ENCODE measurements at regions of chr2 and their contacts with region 1.

Region 1: GRCh38 chr2:196277002-196277401 is 105.6 kb upstream of the STK17B start:
- DNase-seq: peak in 7 of 9 donors; percentile 45 to 74 (median 63)
- ATAC-seq: peak; percentile 79
- H3K4me3 ChIP-seq: no peak overlapping the region
- H3K4me3 Mint-ChIP-seq: peak overlapping the region in 6 of 10 donors; percentile 30 to 83 (median 65)
- H3K27ac ChIP-seq: peak overlapping the region; percentile 63
- H3K27ac Mint-ChIP-seq: peak overlapping the region; percentile 50 to 99 (median 89)
- H3K4me1 ChIP-seq: peaks cover 21 to 42% of the 10 kb centered on the region in 2 donors
- H3K4me1 Mint-ChIP-seq: peaks cover 29 to 60% (median 47%) of the 10 kb centered on the region in 7 donors
- H3K27me3 ChIP-seq: no peaks in the 10 kb centered on the region
- H3K27me3 Mint-ChIP-seq: no peaks in the 10 kb centered on the region

Region 2: DNA sequence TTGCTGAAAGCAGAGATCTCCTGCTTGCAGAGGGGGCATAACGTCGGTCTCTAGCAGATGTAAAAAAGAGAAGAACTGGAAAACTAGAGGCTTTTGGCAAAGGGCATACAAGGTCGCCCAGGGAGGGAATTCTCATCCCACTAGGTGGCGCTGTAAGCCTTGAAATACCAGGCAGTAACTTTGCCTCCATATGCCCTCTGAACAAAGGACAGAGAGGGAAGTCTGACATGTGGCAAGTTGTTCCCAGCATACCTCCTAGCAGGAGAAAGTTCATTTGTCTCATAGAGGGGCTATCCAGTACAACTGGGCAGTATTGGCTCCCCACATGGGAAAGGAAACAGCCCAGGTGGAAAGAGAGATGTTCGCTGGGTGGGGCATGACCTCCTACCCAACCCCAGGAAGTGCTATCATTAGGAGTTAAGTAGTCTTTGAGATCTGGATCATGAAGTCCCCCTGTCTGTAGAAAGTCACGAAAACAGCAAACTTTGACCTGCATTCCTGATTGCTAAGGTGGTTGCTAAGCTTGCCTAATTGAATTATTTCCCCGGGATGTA is 145.5 kb before region 1 on chr2:
- CTCF ChIA-PET with region 1: interaction called, 12 read pairs
- POLR2A ChIA-PET with region 1: interaction called, 5 read pairs
- intact Hi-C with region 1: loop called (anchors 1 to 2 kb)
- DNase-seq: peak in 4 of 9 donors; percentile 30 to 57 (median 50)
- ATAC-seq: peak; percentile 58
- H3K4me3 ChIP-seq: no peak overlapping the region
- H3K4me3 Mint-ChIP-seq: peak overlapping the region in 3 of 10 donors; percentile 1 to 36 (median 32)
- H3K27ac ChIP-seq: no peak overlapping the region
- H3K27ac Mint-ChIP-seq: peak overlapping the region in 8 of 9 donors; percentile 63 to 91 (median 79)
- H3K4me1 ChIP-seq: no peaks in the 10 kb centered on the region
- H3K4me1 Mint-ChIP-seq: peaks cover 0 to 27% (median 16%) of the 10 kb centered on the region in 7 donors
- H3K27me3 ChIP-seq: no peaks in the 10 kb centered on the region
- H3K27me3 Mint-ChIP-seq: no peaks in the 10 kb centered on the region

Region 3: DNA sequence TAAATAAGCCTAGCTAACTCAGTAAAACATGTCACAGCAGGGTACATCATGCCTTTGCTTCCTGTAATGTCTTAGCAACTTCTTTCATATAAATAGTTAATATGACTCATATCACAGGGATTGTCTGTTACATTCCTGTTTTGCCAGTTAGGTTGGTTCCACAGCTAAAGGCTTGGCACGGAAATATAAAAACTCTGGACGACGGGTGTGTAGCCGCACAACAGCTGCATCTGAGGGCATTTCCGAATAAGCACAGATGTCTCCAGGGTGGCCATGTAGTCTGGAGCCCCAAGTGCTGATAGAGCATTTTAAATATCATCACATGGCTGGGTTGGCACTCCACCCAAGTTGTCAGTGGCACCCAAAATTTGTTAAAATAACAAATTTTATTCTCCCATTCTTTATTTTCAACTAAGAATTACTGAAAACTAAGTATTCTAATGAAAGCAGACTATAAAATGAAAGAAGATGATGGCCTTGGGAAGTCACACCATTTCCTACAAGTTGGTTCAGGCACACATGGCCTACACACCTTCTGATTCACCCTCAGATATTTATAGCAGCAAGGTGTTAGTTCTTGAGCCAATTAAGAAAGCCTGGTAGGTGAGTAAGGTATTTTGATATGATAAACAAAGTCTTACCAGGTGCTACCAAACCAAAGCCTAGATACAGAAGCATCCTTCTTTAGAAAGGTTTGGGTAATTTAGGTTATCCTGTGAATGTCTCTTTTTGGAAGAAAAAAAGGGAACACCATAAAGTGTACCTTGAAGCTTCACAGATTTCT is 43.8 kb before region 1 on chr2:
- CTCF ChIA-PET with region 1: interaction called, 25 read pairs
- POLR2A ChIA-PET with region 1: interaction called, 24 read pairs
- intact Hi-C with region 1: no loop called
- DNase-seq: no peak
- ATAC-seq: no peak
- H3K4me3 ChIP-seq: peak overlapping the region; percentile 19
- H3K4me3 Mint-ChIP-seq: peak overlapping the region in 8 of 10 donors; percentile 29 to 71 (median 46)
- H3K27ac ChIP-seq: peak overlapping the region; percentile 84
- H3K27ac Mint-ChIP-seq: peak overlapping the region; percentile 89 to 99 (median 97)
- H3K4me1 ChIP-seq: peaks cover 31 to 72% of the 10 kb centered on the region in 2 donors
- H3K4me1 Mint-ChIP-seq: peaks cover 36 to 97% (median 89%) of the 10 kb centered on the region in 7 donors
- H3K27me3 ChIP-seq: no peaks in the 10 kb centered on the region
- H3K27me3 Mint-ChIP-seq: no peaks in the 10 kb centered on the region

Region 4: DNA sequence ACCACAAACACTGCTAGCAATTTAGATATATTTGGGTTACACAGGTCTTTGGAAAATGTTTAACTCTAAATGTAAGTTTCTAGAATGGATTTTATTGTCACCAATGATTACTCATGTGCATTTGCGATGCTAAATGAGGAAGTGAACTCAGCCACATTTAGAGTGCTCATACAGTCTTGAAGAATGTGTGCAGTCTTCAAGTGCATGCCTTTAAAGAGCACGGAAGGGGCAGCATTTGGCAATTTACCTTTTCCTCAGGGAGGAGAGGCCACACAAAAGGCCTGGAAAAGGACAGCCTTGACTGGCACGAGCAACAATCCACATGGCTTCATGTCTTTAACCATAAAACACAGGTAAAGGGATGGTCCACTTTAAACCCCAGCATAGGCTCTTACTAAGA is 27.1 kb before region 1 on chr2:
- CTCF ChIA-PET with region 1: interaction called, 3 read pairs
- POLR2A ChIA-PET with region 1: interaction called, 33 read pairs
- intact Hi-C with region 1: no loop called
- DNase-seq: no peak
- ATAC-seq: peak; percentile 80
- H3K4me3 ChIP-seq: no peak overlapping the region
- H3K4me3 Mint-ChIP-seq: peak overlapping the region; percentile 4 to 69 (median 44)
- H3K27ac ChIP-seq: no peak overlapping the region
- H3K27ac Mint-ChIP-seq: peak overlapping the region; percentile 15 to 89 (median 80)
- H3K4me1 ChIP-seq: peaks cover 9 to 54% of the 10 kb centered on the region in 2 donors
- H3K4me1 Mint-ChIP-seq: peaks cover 47 to 93% (median 89%) of the 10 kb centered on the region in 7 donors
- H3K27me3 ChIP-seq: no peaks in the 10 kb centered on the region
- H3K27me3 Mint-ChIP-seq: no peaks in the 10 kb centered on the region

Region 5: DNA sequence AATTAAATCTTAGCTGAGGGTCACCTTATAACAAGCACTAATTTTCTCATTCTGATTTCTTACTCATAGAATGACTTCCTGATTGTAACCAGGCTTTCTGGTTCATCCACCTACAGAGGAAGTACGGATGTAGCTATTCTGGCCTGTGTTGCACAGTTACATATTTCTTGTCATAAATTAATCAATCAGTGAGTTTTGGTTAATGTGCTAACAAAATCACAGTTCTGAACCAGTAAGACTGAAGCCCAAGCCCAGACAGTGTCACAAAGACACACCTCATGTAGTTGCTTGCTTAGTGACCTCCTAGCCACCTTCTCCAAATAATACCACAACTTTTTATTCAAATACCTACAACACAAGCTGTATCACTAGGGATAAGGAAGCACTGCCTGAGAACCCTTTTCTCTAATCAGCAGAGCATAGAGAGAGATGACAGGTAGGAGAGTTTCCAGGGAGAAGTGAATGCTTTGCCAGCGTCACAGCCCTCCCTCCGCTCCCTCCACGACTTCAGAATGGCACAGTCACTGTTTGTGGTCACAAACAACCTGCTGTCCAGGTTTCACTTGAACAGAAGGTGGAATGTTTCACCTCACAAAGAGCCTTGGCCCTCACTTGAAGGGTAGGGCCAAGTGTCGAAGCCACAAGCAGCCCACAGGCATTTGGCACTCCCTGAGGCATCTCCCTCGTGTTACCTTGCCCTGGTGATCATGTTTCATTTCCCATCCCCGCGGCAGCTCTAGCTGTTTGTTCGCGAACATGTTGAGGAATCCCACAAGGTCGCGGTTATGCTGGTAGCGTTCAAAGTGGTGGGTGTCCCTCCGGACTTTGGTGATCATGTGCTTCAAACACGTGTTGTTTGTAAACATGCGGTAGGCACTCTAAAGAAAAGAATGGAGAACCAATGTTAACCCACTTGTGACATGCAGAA is 15.1 kb after region 1 on chr2:
- CTCF ChIA-PET with region 1: interaction called, 4 read pairs
- POLR2A ChIA-PET with region 1: interaction called, 5 read pairs
- intact Hi-C with region 1: loop called in 1 of 2 experiments (anchors 1 kb)
- DNase-seq: no peak
- ATAC-seq: peak; percentile 47
- H3K4me3 ChIP-seq: no peak overlapping the region
- H3K4me3 Mint-ChIP-seq: peak overlapping the region in 1 of 10 donors; percentile 31
- H3K27ac ChIP-seq: no peak overlapping the region
- H3K27ac Mint-ChIP-seq: peak overlapping the region in 3 of 9 donors; percentile 2 to 51 (median 44)
- H3K4me1 ChIP-seq: peaks cover 6 to 10% of the 10 kb centered on the region in 2 donors
- H3K4me1 Mint-ChIP-seq: peaks cover 21 to 56% (median 42%) of the 10 kb centered on the region in 7 donors
- H3K27me3 ChIP-seq: no peaks in the 10 kb centered on the region
- H3K27me3 Mint-ChIP-seq: no peaks in the 10 kb centered on the region

Measured in naive thymus-derived CD4-positive, alpha-beta T cell (primary cell).